Testis (tissue), 5 donors: ENCODE measurements at regions of chr3 and their contacts with region 1.

Region 1: GRCh38 chr3:141875374-141875892 is 1.0 kb upstream of the ATP1B3 start:
- DNase-seq: peak; percentile 92
- H3K4me3 ChIP-seq: peak overlapping the region; percentile 84 to 90
- H3K27ac ChIP-seq: peak overlapping the region; percentile 78 to 100
- H3K4me1 ChIP-seq: peaks cover 10% of the 10 kb centered on the region
- H3K27me3 ChIP-seq: no peaks in the 10 kb centered on the region
- CTCF ChIP-seq: peak; percentile 65 to 77 (median 76)
- POLR2A ChIP-seq: no peak

Region 2: GRCh38 chr3:141618103-141618910 is 257.1 kb before region 1 on chr3:
- intact Hi-C with region 1: no loop called
- DNase-seq: no peak
- H3K4me3 ChIP-seq: no peak overlapping the region
- H3K27ac ChIP-seq: no peak overlapping the region
- H3K4me1 ChIP-seq: no peaks in the 10 kb centered on the region
- H3K27me3 ChIP-seq: no peaks in the 10 kb centered on the region
- CTCF ChIP-seq: no peak
- POLR2A ChIP-seq: no peak

Region 3: DNA sequence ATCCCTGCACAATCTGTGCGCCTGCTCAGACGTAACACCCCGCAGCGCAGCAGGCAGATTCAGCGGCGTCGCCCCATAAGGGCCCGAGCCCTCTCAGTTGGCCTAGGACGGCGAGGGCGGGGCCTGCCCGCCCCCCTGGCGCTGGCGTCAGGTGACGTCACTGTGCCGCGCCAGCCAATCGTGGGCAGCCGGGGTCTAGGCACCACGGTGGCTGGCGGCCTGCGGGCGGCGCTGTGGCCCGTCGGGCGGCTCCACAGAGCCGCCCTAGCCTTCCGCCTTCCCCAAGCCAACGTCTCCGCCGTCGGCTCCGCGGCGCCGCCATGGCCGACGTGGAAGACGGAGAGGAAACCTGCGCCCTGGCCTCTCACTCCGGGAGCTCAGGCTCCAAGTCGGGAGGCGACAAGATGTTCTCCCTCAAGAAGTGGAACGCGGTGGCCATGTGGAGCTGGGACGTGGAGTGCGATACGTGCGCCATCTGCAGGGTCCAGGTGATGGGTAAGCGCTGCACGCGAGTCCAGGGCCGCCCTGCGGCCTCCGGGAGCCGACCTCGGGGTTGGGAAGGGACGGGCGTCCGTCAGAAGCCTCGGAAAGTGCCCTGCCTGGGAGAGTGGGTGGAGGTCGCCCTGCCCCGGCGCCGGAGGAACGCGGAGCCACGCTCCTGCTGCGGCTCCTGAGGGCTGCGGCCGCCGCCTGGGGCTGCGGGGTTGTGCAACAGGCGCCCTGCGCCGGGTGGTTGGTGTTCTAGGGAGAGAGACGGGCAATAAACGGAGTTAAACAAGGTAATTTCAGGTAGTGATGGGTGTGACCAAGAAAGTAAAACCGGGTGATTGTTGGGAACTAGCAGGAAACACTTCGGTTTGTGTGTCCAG is 137.2 kb before region 1 on chr3 and contains the start of gene RNF7:
- intact Hi-C with region 1: loop called (anchors 10 kb)
- DNase-seq: peak; percentile 96
- H3K4me3 ChIP-seq: peak within 1 kb of the TSS; percentile 96
- H3K27ac ChIP-seq: peak within 1 kb of the TSS; percentile 96 to 97
- H3K4me1 ChIP-seq: peaks cover 21% of the 10 kb centered on the region
- H3K27me3 ChIP-seq: no peaks in the 10 kb centered on the region
- CTCF ChIP-seq: peak; percentile 86 to 98 (median 95)
- POLR2A ChIP-seq: peak; percentile 60
- total RNA-seq, gene RNF7: 60.7 to 69.9 TPM

Region 4: DNA sequence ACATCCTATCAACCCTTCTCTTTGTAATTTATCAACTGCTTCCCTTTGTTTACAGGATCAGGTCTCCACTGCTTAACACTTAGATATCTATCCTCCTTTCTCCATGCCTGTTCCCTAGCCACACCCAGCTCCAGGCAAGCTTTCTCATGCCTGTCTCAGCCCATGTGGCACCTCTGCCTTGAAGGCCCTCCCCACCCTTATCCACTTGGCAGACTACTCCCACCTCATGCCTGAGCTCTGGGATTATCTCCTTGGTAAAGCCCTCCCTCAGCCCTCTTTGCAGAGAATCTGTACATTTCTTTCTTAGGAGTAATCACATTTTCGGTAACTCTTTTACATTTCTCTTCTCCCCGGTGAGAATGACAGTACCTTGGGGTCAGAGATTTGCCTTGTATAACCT is 97.0 kb after region 1 on chr3:
- intact Hi-C with region 1: no loop called
- DNase-seq: peak; percentile 41
- H3K4me3 ChIP-seq: no peak overlapping the region
- H3K27ac ChIP-seq: no peak overlapping the region
- H3K4me1 ChIP-seq: no peaks in the 10 kb centered on the region
- H3K27me3 ChIP-seq: no peaks in the 10 kb centered on the region
- CTCF ChIP-seq: no peak
- POLR2A ChIP-seq: no peak